HEK293 (cell line): ENCODE measurements at regions of chr17 and their contacts with region 1.

Region 1: DNA sequence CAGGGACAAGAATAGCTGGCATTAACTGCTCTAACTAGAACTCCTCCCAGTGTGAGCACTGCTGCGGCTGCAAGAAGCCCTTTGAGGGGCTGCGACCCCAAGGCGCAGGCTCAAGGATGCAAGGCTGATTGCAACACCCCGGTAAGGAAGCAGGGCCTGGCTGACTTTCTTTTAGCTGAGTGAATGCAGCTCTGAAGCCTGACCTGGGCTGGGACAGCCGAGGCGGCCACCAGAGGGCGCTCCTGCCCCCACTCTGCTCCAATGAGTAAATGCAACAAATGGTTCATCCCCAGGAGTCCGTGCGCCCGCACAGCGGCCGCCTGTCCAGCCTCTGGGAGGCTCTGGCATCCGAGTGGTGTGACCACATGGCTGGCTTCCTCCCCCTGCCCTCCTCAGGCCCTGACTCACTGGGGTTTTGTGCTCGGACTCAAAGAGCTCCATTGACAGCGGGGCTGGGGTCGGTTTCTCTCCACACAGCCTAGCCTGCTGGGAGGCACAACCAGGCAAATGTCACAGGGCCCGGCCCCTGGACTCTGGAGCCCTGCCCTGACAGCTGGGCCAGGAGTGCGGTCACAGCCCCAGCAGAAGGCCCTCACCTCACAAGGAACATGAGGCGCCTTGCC is at the start of gene SMIM5:
- H3K4me3 ChIP-seq: no peak within 1 kb of the TSS
- H3K27ac ChIP-seq: no peak within 1 kb of the TSS
- H3K4me1 ChIP-seq: peaks cover 11% of the 10 kb centered on the region
- CTCF ChIP-seq: peak; percentile 83

Region 2: DNA sequence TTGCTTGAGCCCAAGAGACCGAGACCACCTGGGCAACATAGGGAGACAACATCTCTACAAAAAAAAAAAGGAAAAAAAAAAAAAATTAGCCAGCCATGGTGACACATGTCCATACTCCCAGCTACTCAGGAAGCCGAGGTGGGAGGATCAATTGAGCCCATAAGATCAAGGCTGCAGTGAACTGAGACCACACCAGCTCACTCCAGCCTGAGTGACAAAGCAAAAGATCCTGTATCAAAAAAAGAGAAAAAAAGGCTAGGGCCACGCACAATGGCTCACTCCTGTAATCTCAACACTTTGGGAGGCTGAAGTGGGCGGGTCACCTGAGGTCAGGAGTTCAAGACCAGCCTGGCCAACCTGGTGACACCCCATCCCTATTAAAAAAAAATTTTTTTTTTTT is 464.0 kb before region 1 on chr17:
- CTCF ChIA-PET with region 1: no interaction called
- POLR2A ChIA-PET with region 1: no interaction called
- H3K4me3 ChIP-seq: no peak overlapping the region
- H3K27ac ChIP-seq: 0 out of 2 replicates have a peak overlapping the region, but pooled peaks have one; percentile 41
- H3K4me1 ChIP-seq: no peaks in the 10 kb centered on the region
- CTCF ChIP-seq: no peak

Region 3: GRCh38 chr17:75552425-75553294 is 80.3 kb before region 1 on chr17:
- CTCF ChIA-PET with region 1: interaction called, 12 read pairs
- POLR2A ChIA-PET with region 1: no interaction called
- H3K4me3 ChIP-seq: no peak overlapping the region
- H3K27ac ChIP-seq: no peak overlapping the region
- H3K4me1 ChIP-seq: peaks cover 15% of the 10 kb centered on the region; the same call in 1 of the 2 replicates
- CTCF ChIP-seq: no peak

Region 4: GRCh38 chr17:75601057-75602051 is 31.6 kb before region 1 on chr17:
- CTCF ChIA-PET with region 1: interaction called, 42 read pairs
- POLR2A ChIA-PET with region 1: interaction called, 6 read pairs
- H3K4me3 ChIP-seq: no peak overlapping the region
- H3K27ac ChIP-seq: no peak overlapping the region
- H3K4me1 ChIP-seq: no peaks in the 10 kb centered on the region
- CTCF ChIP-seq: peak; percentile 86

Region 5: DNA sequence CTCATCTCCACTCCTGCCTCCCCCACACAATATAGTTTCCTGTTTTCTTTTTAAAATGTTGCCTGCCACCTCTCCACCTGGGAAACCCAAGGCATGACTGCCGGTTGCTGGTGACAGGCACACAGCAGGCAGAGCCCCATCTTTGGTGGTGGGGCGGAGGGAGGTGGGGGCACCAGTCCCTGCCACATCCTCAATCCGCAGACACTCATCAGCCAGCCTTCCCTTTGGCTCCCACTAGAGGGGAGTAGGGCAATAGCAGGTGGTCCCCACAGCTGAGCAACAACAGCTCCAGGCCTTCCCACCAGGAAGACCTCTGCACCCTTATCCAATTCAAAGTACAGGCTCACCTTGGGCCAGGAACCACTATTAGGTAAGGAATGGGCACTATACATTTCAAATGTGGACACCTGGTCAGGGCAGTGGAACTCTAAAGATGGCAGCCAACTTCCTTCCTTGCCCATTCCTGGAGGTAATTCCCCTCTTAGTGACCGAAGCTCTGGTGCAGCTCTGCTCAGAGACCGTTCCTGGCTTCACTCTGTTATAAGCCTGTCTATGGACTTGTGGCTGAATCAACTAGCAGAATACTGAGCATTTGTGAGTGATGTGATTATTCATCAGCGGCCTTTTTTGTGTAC is 20.1 kb after region 1 on chr17:
- CTCF ChIA-PET with region 1: interaction called, 410 read pairs
- POLR2A ChIA-PET with region 1: interaction called, 5 read pairs
- H3K4me3 ChIP-seq: no peak overlapping the region
- H3K27ac ChIP-seq: no peak overlapping the region
- H3K4me1 ChIP-seq: no peaks in the 10 kb centered on the region
- CTCF ChIP-seq: peak; percentile 71

Region 6: DNA sequence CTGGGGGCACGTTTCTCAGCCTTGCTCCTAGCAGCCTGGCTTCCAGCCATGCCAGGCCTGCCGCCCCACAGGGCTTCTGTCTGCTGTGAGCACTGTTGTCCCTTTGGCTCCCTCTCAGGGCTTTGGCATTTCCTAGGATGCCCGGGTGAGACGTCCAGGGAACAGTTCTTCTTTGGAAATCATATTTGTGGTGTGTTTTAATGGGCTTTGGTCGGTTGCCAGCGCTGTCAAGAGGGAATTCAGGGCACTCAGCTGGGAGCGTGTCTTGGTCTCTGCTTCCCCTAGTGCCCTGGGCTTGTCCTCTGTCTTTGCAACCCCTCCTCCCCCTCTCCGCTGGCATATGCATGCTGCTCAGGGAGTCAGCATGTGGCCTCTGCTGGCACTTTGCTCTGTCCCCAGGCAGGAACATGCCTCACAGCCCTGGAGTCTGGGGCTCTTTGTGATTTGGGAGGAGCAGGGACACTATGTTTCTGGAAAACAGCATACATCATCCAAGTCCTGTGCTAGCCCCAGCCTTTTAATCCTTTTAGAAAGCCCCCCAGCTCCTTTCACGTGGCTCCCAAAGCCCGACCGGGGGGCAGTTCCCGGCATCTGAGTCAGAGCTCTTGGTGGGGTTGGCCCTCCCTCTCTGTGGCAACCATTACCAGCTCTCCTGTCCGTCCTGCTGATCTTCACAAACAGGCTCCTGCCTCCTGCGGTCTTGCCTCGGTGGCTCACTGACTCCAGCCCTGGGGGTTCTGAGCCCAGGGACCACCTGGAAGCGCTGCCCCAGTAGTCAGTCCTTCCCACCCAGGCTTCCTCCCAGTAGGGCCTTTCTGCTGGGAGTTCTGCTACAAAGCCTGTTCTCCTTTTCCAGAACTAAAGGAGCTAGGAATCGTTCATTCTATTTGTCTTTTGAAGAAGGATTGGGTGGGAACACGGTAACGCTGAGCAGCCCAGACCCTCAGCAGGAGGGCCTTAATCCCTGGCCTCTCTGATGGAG is 60.8 kb after region 1 on chr17:
- CTCF ChIA-PET with region 1: interaction called, 10 read pairs
- POLR2A ChIA-PET with region 1: interaction called, 6 read pairs
- H3K4me3 ChIP-seq: no peak overlapping the region
- H3K27ac ChIP-seq: no peak overlapping the region
- H3K4me1 ChIP-seq: no peaks in the 10 kb centered on the region; the same call in 1 of the 2 replicates
- CTCF ChIP-seq: no peak

Region 7: DNA sequence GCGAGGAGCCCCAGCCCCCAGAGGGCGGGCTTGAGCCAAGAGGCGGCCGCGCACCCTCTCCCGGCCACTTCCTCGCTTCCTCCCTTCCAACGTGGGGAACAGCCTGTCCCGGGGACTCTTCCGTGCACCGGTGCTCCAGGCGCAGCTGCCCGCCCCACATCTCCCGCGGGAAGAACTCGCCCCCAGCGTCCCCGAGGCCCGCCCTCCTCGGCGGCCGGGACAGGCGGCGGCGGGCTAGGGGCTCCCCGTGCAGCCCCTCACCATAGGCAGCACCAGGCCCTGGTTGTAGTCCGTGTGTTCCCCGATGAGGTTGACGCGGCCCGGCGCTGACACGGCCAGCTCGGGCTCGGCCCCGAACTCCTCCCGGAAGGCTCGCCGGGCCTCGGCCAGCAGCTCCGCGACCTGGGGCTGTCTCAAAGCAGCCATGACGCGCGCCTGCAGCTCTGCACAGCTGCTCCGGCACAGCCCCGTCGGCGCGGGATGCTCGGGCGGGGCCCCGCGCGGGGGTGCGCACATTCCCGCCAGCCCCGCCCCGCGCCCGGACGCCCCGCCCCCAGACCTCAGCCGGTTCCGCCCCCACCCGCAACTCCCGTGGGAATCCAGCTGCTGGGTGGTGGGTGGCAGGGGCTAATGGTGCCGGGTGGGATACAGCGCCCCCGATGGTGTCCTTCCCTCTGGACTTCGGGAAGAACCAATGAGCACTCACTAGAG is 131.9 kb after region 1 on chr17 and contains the start of gene GALK1:
- CTCF ChIA-PET with region 1: interaction called, 11 read pairs
- POLR2A ChIA-PET with region 1: no interaction called
- H3K4me3 ChIP-seq: peak within 1 kb of the TSS; percentile 63
- H3K27ac ChIP-seq: peak within 1 kb of the TSS; percentile 70
- H3K4me1 ChIP-seq: peaks cover 3% of the 10 kb centered on the region; the same call in 1 of the 2 replicates
- CTCF ChIP-seq: peak; percentile 93